GM13977 (cell line): ENCODE measurements at regions of chr3 and their contacts with region 1.

Region 1: GRCh38 chr3:183385698-183386613 is 42.5 kb downstream of the MCF2L2 start:
- DNase-seq: peak; percentile 63
- CTCF ChIP-seq: peak; percentile 68

Region 2: GRCh38 chr3:182713743-182714517 is 672.0 kb before region 1 on chr3:
- in situ Hi-C with region 1: loop called (anchors 25 kb)
- DNase-seq: peak; percentile 53
- CTCF ChIP-seq: peak; percentile 75

Region 3: DNA sequence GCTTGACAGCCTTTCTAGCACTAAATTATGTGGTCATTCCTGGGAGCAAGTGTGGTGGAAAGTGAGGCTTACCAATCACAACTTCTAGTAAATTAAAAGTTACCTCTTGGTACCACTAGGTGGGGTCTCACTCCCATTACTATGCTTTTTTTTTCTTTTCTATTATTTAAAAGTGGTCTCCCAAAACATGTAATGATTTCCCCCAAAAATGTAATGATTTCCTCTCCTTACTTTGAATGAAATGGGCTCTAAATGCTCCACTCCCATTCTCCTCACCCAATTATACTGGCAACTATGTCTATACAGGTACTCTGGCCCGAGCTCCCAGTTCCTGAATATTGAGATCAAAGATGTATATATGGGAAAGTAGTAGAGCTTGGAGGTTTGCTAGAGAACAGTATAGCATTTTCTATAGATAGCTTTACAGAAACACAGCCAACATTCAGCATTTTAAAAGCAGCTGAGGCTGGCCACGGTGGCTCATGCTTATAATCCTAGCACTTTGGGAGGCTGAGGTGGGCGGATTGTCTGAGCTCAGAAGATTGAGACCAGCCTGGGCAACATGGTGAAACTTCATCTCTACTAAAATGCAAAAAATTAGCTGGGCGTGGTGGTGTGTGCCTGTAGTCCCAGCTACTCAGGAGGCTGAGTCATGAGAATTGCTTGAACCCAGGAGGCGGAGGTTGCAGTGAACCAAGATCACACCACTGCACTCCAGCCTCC is 476.5 kb before region 1 on chr3:
- in situ Hi-C with region 1: loop called (anchors 25 kb)
- DNase-seq: peak; percentile 13
- CTCF ChIP-seq: peak; percentile 53

Region 4: GRCh38 chr3:183122257-183122932 is 263.6 kb before region 1 on chr3:
- in situ Hi-C with region 1: loop called (anchors 10 kb)
- DNase-seq: peak; percentile 62
- CTCF ChIP-seq: peak; percentile 76